ENCODE measurements at regions of chrX and their contacts with region 1.

Region 1: GRCh38 chrX:123960042-123960611 is 1.4 kb upstream of the STAG2 start:
- DNase-seq: peak; percentile 83
- H3K4me3 Mint-ChIP-seq: peak overlapping the region; percentile 95
- H3K27ac Mint-ChIP-seq: peak overlapping the region; percentile 98
- H3K4me1 Mint-ChIP-seq: peaks cover 29% of the 10 kb centered on the region
- H3K27me3 Mint-ChIP-seq: peaks cover 2% of the 10 kb centered on the region

Region 2: GRCh38 chrX:123203772-123204171 is 756.4 kb before region 1 on chrX:
- intact Hi-C with region 1: no loop called
- DNase-seq: no peak
- H3K4me3 Mint-ChIP-seq: no peak overlapping the region
- H3K27ac Mint-ChIP-seq: no peak overlapping the region
- H3K4me1 Mint-ChIP-seq: no peaks in the 10 kb centered on the region
- H3K27me3 Mint-ChIP-seq: no peaks in the 10 kb centered on the region

Region 3: DNA sequence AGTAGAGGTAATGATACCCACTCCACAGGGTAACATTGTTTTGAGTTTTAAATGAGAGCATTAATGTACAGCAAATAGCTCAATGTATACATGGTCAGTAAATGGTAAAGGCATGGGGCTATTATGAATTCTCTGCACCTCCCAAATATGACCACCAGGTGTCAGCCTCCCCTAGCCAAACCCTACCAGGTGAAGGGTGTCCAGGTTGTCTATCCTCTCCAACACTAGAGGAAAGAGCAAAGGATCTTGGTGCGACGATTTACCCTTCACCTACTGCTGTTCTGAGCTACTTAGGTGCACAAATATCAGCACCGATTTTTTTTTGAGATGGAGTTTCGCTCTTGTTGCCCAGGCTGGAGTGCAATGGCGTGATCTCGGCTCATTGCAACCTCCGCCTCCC is 126.7 kb before region 1 on chrX:
- intact Hi-C with region 1: loop called (anchors 1 kb)
- DNase-seq: peak; percentile 27
- H3K4me3 Mint-ChIP-seq: no peak overlapping the region
- H3K27ac Mint-ChIP-seq: no peak overlapping the region
- H3K4me1 Mint-ChIP-seq: no peaks in the 10 kb centered on the region
- H3K27me3 Mint-ChIP-seq: no peaks in the 10 kb centered on the region

Region 4: DNA sequence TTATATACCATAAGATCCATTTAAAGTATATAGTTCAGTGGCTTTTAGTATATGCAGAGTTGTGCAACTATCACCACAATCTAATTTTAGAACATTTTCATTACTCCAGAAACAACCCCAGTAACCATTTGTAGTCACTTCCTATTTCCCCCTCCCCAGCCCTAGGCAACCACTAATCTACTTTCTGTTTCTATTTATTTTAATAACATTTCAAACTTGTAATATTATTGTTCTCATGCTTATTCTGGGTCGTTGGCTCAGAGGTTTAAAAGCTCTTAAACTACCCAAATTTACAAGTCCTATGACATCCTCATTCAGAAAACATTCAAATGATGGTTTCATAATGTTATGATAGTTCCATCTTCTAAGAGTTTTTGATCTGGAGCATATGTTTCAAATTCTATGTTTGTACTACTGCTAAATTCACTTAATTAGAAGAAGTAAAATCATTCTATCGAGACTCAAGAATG is 81.8 kb before region 1 on chrX:
- intact Hi-C with region 1: loop called (anchors 5 kb)
- DNase-seq: no peak
- H3K4me3 Mint-ChIP-seq: peak overlapping the region; percentile 37
- H3K27ac Mint-ChIP-seq: peak overlapping the region; percentile 71
- H3K4me1 Mint-ChIP-seq: peaks cover 20% of the 10 kb centered on the region
- H3K27me3 Mint-ChIP-seq: no peaks in the 10 kb centered on the region

Region 5: GRCh38 chrX:123993326-123993725 is 33.2 kb after region 1 on chrX:
- intact Hi-C with region 1: no loop called
- DNase-seq: no peak
- H3K4me3 Mint-ChIP-seq: no peak overlapping the region
- H3K27ac Mint-ChIP-seq: no peak overlapping the region
- H3K4me1 Mint-ChIP-seq: peaks cover 30% of the 10 kb centered on the region
- H3K27me3 Mint-ChIP-seq: no peaks in the 10 kb centered on the region

Region 6: DNA sequence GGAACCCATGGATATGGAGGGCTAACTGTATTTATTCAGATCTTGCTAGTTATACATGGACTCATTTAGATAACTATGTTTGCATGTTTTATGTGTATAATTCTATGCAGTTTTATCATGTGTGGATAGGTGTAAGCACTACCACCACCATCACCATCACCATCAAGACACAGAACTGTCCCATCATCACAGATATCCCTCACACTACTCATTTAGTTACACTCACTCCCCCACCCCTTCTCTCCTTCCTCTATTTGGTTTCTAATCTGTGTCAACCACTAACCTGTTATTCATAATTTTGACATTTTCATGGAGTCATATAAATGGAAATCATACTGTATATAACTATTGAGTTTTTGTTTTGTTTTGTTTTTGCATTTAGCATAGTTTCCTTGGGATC is 45.1 kb after region 1 on chrX:
- intact Hi-C with region 1: loop called (anchors 1 kb)
- DNase-seq: no peak
- H3K4me3 Mint-ChIP-seq: no peak overlapping the region
- H3K27ac Mint-ChIP-seq: no peak overlapping the region
- H3K4me1 Mint-ChIP-seq: peaks cover 39% of the 10 kb centered on the region
- H3K27me3 Mint-ChIP-seq: no peaks in the 10 kb centered on the region

Region 7: GRCh38 chrX:124086411-124086810 is 126.3 kb after region 1 on chrX:
- intact Hi-C with region 1: loop called (anchors 2 kb)
- DNase-seq: peak; percentile 25
- H3K4me3 Mint-ChIP-seq: peak overlapping the region; percentile 63
- H3K27ac Mint-ChIP-seq: peak overlapping the region; percentile 88
- H3K4me1 Mint-ChIP-seq: peaks cover 20% of the 10 kb centered on the region
- H3K27me3 Mint-ChIP-seq: no peaks in the 10 kb centered on the region

Region 8: GRCh38 chrX:124239911-124240310 is 279.8 kb after region 1 on chrX:
- intact Hi-C with region 1: loop called (anchors 1 kb)
- DNase-seq: peak; percentile 34
- H3K4me3 Mint-ChIP-seq: peak overlapping the region; percentile 59
- H3K27ac Mint-ChIP-seq: peak overlapping the region; percentile 87
- H3K4me1 Mint-ChIP-seq: peaks cover 45% of the 10 kb centered on the region
- H3K27me3 Mint-ChIP-seq: peaks cover 4% of the 10 kb centered on the region

Region 9: DNA sequence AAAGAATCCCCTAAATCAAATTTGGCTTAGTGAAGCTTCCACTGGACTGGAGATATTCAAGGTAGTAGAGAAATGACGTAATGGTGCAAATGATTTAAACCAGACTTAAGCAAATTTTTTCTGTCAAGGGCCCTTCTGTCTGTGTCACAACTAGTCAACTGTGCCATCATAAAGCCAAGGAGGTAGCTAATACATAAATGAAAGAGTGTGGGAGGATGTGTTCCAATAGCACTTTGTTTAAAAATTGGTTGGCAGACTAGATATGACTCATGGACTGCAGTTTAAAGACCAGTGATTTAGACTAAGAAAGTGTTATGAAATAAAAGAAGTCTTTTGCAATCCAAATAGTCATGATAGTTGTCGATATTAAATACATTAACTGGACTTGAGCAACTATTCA is 1335.2 kb after region 1 on chrX:
- intact Hi-C with region 1: loop called (anchors 5 kb)
- DNase-seq: no peak
- H3K4me3 Mint-ChIP-seq: peak overlapping the region; percentile 3
- H3K27ac Mint-ChIP-seq: peak overlapping the region; percentile 61
- H3K4me1 Mint-ChIP-seq: peaks cover 18% of the 10 kb centered on the region
- H3K27me3 Mint-ChIP-seq: no peaks in the 10 kb centered on the region